CD4-positive, alpha-beta T cell (primary cell): ENCODE measurements at regions of chr5 and their contacts with region 1.

Region 1: DNA sequence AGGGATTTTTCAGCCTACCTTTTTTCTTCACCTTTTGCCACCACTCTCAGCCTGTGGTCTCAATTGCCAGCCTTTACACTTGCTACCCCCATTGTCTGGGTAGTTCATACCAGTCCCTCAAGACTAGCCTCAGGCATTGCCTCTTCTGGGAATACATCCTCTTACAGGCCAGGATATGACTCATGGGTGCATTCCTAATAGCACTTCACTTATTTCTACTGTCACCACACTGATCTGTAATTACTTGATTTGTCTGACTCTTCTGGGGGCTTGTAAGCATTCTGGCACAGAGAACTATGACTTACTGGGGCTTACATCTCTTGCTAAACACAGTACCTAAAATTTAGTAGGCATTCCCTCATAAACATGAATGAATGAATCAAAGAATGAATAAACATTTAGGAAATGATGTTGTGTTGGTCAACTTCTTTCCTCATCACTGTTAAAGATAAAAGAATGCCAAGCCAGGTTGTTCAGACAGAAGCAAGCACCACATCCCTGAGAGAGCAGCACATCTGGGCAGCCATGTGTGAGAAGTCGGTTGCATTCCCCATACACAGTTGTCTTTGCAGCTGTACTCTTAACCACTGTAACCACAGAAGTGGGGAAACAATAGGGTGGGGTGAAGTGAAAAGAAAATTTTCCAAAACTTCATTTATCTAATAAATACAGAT is 27.6 kb downstream of the IL7R start:
- DNase-seq: peak in 2 of 14 experiments; percentile 50 to 51
- ATAC-seq: peak; percentile 27
- H3K4me3 ChIP-seq: no peak overlapping the region
- H3K4me3 Mint-ChIP-seq: no peak overlapping the region
- H3K27ac ChIP-seq: no peak overlapping the region
- H3K27ac Mint-ChIP-seq: peak overlapping the region; percentile 55
- H3K4me1 ChIP-seq: peaks cover 21% of the 10 kb centered on the region
- H3K4me1 Mint-ChIP-seq: peaks cover 55% of the 10 kb centered on the region
- H3K27me3 ChIP-seq: no peaks in the 10 kb centered on the region
- H3K27me3 Mint-ChIP-seq: no peaks in the 10 kb centered on the region
- CTCF ChIP-seq: no peak

Region 2: DNA sequence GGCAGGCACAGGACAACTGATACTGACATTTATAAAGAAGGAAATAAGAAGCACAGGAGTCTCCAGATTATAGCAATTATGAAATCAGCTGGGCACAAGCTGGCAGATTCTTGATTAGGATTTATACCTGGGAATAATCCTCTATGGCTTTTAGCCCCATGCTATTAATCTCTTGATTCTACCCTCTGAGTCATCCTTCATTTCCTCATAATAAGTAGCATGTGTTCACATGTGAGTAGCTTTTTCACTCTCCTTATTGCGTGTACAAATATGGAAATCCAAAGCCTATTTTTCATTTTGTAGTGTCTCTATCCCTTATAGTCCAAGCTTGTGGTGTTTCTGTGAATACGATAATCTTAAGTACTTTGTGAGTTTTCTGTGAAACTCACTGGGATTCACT is 468.9 kb before region 1 on chr5:
- CTCF ChIA-PET with region 1: no interaction called
- POLR2A ChIA-PET with region 1: no interaction called
- intact Hi-C with region 1: no loop called
- DNase-seq: no peak
- ATAC-seq: no peak
- H3K4me3 ChIP-seq: no peak overlapping the region
- H3K4me3 Mint-ChIP-seq: no peak overlapping the region
- H3K27ac ChIP-seq: no peak overlapping the region
- H3K27ac Mint-ChIP-seq: no peak overlapping the region
- H3K4me1 ChIP-seq: no peaks in the 10 kb centered on the region
- H3K4me1 Mint-ChIP-seq: no peaks in the 10 kb centered on the region
- H3K27me3 ChIP-seq: no peaks in the 10 kb centered on the region
- H3K27me3 Mint-ChIP-seq: peaks cover 13% of the 10 kb centered on the region
- CTCF ChIP-seq: no peak

Region 3: GRCh38 chr5:35651002-35651756 is 233.1 kb before region 1 on chr5:
- CTCF ChIA-PET with region 1: interaction called, 7 read pairs
- POLR2A ChIA-PET with region 1: interaction called, 28 read pairs
- intact Hi-C with region 1: no loop called
- DNase-seq: peak; percentile 37 to 84 (median 58)
- ATAC-seq: peak; percentile 99
- H3K4me3 ChIP-seq: no peak overlapping the region
- H3K4me3 Mint-ChIP-seq: no peak overlapping the region
- H3K27ac ChIP-seq: no peak overlapping the region
- H3K27ac Mint-ChIP-seq: peak overlapping the region; percentile 23
- H3K4me1 ChIP-seq: peaks cover 5% of the 10 kb centered on the region
- H3K4me1 Mint-ChIP-seq: peaks cover 16% of the 10 kb centered on the region
- H3K27me3 ChIP-seq: no peaks in the 10 kb centered on the region
- H3K27me3 Mint-ChIP-seq: no peaks in the 10 kb centered on the region
- CTCF ChIP-seq: peak; percentile 84

Region 4: DNA sequence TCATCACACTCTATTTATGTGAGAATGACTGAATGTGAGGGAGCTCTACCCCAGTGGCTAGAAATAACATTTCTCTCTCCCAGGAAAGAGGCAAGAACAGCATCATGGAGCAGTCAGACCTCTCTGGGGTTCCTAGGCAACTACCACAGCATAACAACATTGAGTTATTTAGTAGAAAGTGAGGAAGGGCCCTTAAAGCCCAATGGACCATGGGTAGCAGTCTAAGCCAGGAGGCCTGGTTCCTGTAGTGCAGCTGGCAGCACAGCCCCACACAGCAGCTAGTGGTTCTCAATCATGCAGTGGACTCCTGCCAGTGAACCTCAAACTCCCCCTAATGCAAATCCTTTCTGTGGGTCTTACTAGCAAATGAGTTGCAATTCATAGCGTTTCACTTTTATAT is 211.3 kb before region 1 on chr5:
- CTCF ChIA-PET with region 1: no interaction called
- POLR2A ChIA-PET with region 1: interaction called, 13 read pairs
- intact Hi-C with region 1: no loop called
- DNase-seq: peak in 12 of 14 experiments; percentile 3 to 70 (median 23)
- ATAC-seq: peak; percentile 74
- H3K4me3 ChIP-seq: no peak overlapping the region
- H3K4me3 Mint-ChIP-seq: peak overlapping the region; percentile 63
- H3K27ac ChIP-seq: peak overlapping the region in 1 of 2 donors; percentile 25
- H3K27ac Mint-ChIP-seq: peak overlapping the region; percentile 93
- H3K4me1 ChIP-seq: peaks cover 10% of the 10 kb centered on the region
- H3K4me1 Mint-ChIP-seq: peaks cover 78% of the 10 kb centered on the region
- H3K27me3 ChIP-seq: no peaks in the 10 kb centered on the region
- H3K27me3 Mint-ChIP-seq: no peaks in the 10 kb centered on the region
- CTCF ChIP-seq: no peak

Region 5: DNA sequence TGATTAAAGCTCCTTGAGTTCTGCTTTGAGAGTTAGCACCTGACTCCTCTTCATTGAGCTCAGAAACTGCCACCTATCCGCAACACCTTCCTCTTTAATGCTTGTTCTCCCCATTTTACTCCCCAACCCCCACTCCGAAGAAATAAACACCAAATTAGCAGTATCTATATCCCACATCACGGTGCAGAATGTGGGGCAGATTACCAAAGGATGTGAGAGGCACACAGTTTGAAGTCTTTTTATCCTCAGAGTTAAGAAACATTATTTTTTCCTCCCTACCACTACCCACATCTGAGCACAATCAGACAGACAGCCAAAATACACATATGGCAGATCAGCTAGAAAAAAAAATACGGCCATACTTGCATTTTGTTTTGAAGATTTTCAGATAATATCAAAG is 53.7 kb before region 1 on chr5:
- CTCF ChIA-PET with region 1: no interaction called
- POLR2A ChIA-PET with region 1: interaction called, 39 read pairs
- intact Hi-C with region 1: no loop called
- DNase-seq: peak in 6 of 14 experiments; percentile 43 to 85 (median 71)
- ATAC-seq: peak; percentile 87
- H3K4me3 ChIP-seq: peak overlapping the region; percentile 10
- H3K4me3 Mint-ChIP-seq: peak overlapping the region; percentile 60
- H3K27ac ChIP-seq: peak overlapping the region; percentile 42 to 45
- H3K27ac Mint-ChIP-seq: peak overlapping the region; percentile 87
- H3K4me1 ChIP-seq: peaks cover 61% of the 10 kb centered on the region
- H3K4me1 Mint-ChIP-seq: peaks cover 95% of the 10 kb centered on the region
- H3K27me3 ChIP-seq: no peaks in the 10 kb centered on the region
- H3K27me3 Mint-ChIP-seq: no peaks in the 10 kb centered on the region
- CTCF ChIP-seq: no peak

Region 6: DNA sequence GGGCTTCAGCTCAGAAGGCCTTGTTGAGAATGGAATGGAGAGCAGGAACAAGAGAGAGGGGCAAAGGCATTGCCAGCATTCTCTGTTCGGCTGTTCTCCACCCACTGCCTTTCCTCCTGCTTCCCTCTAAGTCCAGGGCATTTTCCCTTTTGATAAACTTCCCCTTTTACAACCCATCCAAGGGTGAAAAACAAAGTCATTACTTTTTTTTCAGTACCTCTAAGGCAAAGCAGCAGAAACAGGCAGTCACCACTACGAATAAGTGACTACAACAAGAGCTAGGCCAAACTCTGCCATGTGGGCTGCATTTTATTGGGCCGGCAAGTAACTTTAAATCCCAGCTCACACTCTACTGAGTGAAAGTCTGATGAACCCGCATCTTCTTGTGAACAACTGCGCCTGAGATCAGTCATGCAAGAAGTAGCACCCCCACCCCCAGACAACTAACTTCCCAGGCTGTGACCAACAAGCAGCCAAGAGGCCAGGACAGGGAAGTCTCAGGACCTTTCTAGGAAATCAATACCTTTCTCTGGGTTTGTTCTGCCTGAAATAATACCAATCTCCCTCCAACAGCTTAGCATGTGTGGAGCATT is 14.5 kb before region 1 on chr5:
- CTCF ChIA-PET with region 1: interaction called, 3 read pairs
- POLR2A ChIA-PET with region 1: interaction called, 73 read pairs
- intact Hi-C with region 1: no loop called
- DNase-seq: no peak
- ATAC-seq: peak; percentile 16
- H3K4me3 ChIP-seq: no peak overlapping the region
- H3K4me3 Mint-ChIP-seq: peak overlapping the region; percentile 31
- H3K27ac ChIP-seq: peak overlapping the region; percentile 1 to 34
- H3K27ac Mint-ChIP-seq: peak overlapping the region; percentile 99
- H3K4me1 ChIP-seq: peaks cover 52% of the 10 kb centered on the region
- H3K4me1 Mint-ChIP-seq: peaks cover 96% of the 10 kb centered on the region
- H3K27me3 ChIP-seq: no peaks in the 10 kb centered on the region
- H3K27me3 Mint-ChIP-seq: no peaks in the 10 kb centered on the region
- CTCF ChIP-seq: no peak

Region 7: DNA sequence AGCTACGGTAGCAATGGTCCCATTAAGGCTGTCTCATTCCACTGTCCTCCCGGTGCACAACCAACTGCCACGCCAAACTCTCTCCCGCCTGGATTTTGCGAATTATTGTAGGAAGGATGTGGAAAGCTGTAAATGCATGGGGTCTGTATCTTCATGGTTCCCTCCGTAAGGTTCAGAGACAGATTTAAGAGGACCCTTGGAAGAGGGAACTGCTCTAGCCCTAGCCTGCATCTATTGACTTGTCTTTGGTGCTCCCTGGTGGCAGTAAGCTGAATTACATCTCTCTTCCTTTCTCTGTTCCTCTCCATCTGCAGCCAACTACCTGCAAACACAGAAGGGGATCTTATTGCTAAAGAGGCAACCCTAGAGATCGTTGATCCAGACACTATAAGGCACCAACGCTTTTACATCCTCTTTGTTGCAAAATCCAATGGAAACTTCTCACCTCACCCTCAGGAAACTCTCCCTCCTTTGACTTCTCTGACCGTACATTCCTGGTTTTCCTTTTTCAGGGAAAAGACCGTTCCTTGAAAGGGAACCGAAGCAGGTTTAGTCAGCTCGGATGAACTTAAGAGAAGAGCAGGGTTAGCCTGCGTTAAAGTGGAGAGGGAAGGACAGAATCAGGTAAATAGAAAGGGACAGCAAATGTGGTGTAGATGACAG is 42.3 kb after region 1 on chr5:
- CTCF ChIA-PET with region 1: interaction called, 20 read pairs
- POLR2A ChIA-PET with region 1: interaction called, 7 read pairs
- intact Hi-C with region 1: loop called in 1 of 2 experiments (anchors 5 kb)
- DNase-seq: peak in 13 of 14 experiments; percentile 30 to 85 (median 51)
- ATAC-seq: peak; percentile 44
- H3K4me3 ChIP-seq: no peak overlapping the region
- H3K4me3 Mint-ChIP-seq: peak overlapping the region; percentile 80
- H3K27ac ChIP-seq: no peak overlapping the region
- H3K27ac Mint-ChIP-seq: no peak overlapping the region
- H3K4me1 ChIP-seq: peaks cover 22% of the 10 kb centered on the region
- H3K4me1 Mint-ChIP-seq: peaks cover 43% of the 10 kb centered on the region
- H3K27me3 ChIP-seq: no peaks in the 10 kb centered on the region
- H3K27me3 Mint-ChIP-seq: no peaks in the 10 kb centered on the region
- CTCF ChIP-seq: peak; percentile 96

Region 8: DNA sequence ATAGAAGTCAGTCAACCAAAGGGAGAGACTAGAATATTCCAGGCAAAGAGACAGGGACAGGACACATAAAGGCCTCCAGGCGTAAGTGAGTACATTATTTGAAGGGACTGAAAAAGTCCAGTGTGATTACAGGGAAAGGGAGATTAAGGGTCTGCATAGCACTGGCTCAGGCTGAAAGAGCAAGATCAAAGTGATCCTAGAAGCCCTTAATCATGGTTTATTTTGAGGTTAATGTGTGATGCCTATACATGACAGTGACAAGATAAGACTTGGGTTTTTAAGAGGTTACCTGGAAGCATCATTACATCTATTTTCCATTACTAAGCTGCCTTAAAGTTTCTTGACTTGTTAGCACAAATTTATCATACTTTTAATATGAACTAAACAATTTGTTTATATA is 241.6 kb after region 1 on chr5:
- CTCF ChIA-PET with region 1: no interaction called
- POLR2A ChIA-PET with region 1: no interaction called
- intact Hi-C with region 1: no loop called
- DNase-seq: no peak
- ATAC-seq: no peak
- H3K4me3 ChIP-seq: no peak overlapping the region
- H3K4me3 Mint-ChIP-seq: no peak overlapping the region
- H3K27ac ChIP-seq: no peak overlapping the region
- H3K27ac Mint-ChIP-seq: no peak overlapping the region
- H3K4me1 ChIP-seq: no peaks in the 10 kb centered on the region
- H3K4me1 Mint-ChIP-seq: peaks cover 18% of the 10 kb centered on the region
- H3K27me3 ChIP-seq: no peaks in the 10 kb centered on the region
- H3K27me3 Mint-ChIP-seq: no peaks in the 10 kb centered on the region
- CTCF ChIP-seq: no peak